CD8-positive, alpha-beta T cell (primary cell): ENCODE measurements at regions of chr4 and their contacts with region 1.

Region 1: DNA sequence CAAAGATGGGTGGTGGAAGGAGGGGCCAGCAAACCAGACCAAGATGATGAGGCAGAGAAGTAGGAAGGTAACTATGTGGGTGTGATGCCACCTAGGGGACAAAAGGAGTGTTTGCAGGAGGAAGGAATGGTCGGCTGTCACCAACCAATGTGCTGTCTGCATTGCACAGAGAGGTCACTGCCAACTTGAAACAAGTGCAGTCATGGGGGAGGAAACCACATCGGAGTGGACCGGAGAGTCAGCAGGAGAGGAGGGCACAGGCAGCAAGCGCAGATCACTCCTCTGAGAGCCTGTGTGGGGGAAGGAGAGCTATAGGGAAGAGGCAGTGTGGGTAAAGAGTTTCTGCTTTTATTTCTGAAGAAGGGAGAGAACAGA is 38.5 kb upstream of the FGFBP2 start:
- DNase-seq: peak in 8 of 9 experiments; percentile 13 to 81 (median 47)
- ATAC-seq: peak; percentile 96
- H3K4me3 ChIP-seq: no peak overlapping the region
- H3K4me3 Mint-ChIP-seq: no peak overlapping the region
- H3K27ac ChIP-seq: no peak overlapping the region
- H3K27ac Mint-ChIP-seq: no peak overlapping the region
- H3K4me1 ChIP-seq: no peaks in the 10 kb centered on the region
- H3K4me1 Mint-ChIP-seq: no peaks in the 10 kb centered on the region
- H3K27me3 ChIP-seq: no peaks in the 10 kb centered on the region
- H3K27me3 Mint-ChIP-seq: peaks cover 3% of the 10 kb centered on the region
- CTCF ChIP-seq: peak; percentile 68

Region 2: DNA sequence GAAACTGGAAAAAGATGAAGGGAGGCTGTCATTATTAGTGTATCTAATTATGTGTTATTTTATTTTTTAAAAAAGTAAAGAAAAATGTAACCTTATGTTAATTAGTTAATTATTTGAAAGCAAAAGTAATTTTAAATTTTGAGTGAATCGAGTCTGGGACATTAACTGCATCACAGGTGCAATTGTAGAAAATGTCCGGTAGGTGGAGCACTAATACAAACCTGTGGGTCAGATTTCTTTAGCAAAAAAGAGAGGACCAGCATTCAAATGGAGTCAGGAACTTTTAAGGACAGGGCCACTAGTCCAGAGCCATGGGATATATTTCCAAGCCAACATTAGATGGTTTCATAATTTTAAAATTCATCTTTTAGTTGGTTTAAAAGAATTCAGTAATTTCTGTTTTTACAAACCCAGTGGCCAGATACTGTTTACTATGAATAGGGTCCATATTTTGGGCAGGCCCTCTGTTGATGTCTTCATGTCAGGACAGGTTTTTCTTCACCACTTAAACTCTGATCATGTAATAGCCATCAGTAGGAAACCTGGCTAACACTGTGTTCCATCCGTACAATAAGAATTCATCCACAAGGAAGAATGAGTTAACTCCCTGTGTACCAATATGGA is 271.4 kb before region 1 on chr4:
- CTCF ChIA-PET with region 1: no interaction called
- POLR2A ChIA-PET with region 1: no interaction called
- intact Hi-C with region 1: loop called (anchors 1 to 2 kb)
- DNase-seq: peak in 6 of 9 experiments; percentile 10 to 71 (median 28)
- ATAC-seq: peak; percentile 70
- H3K4me3 ChIP-seq: no peak overlapping the region
- H3K4me3 Mint-ChIP-seq: no peak overlapping the region
- H3K27ac ChIP-seq: no peak overlapping the region
- H3K27ac Mint-ChIP-seq: no peak overlapping the region
- H3K4me1 ChIP-seq: no peaks in the 10 kb centered on the region
- H3K4me1 Mint-ChIP-seq: peaks cover 20% of the 10 kb centered on the region
- H3K27me3 ChIP-seq: no peaks in the 10 kb centered on the region
- H3K27me3 Mint-ChIP-seq: peaks cover 2% of the 10 kb centered on the region
- CTCF ChIP-seq: peak; percentile 100

Region 3: DNA sequence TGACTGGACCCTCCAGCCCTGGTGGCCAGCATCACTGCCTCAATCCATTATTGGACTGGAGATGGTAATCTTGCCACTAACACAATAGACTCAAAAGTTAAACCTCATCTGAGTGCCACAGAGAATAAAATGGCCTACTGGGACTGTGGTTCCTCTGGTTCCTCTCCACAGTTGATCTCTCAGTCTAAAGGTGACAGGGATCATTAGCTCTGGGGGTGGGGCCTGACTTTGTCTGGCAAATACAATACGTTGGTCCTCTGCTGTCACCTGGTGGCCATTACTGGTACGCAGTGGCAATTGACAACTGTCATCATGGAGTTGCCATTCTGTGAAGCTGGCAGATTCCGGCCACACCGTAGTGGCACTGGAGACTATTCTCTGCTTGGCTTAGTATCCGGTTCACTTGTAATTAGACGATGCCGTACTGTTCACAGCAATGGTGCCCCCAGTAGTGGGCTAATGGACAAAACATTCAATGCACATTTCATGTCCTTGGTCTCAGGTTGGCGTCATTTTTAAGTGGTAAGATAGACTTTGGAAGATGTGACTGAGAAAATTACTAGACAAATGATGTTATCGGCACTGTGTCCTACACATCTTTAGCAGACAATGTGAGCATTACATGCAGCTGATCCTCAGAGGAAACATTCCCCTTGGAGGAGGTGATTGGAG is 45.2 kb before region 1 on chr4:
- CTCF ChIA-PET with region 1: interaction called, 87 read pairs
- POLR2A ChIA-PET with region 1: no interaction called
- intact Hi-C with region 1: no loop called
- DNase-seq: peak; percentile 55 to 87 (median 79)
- ATAC-seq: peak; percentile 98
- H3K4me3 ChIP-seq: no peak overlapping the region
- H3K4me3 Mint-ChIP-seq: no peak overlapping the region
- H3K27ac ChIP-seq: no peak overlapping the region
- H3K27ac Mint-ChIP-seq: no peak overlapping the region
- H3K4me1 ChIP-seq: no peaks in the 10 kb centered on the region
- H3K4me1 Mint-ChIP-seq: peaks cover 10% of the 10 kb centered on the region
- H3K27me3 ChIP-seq: no peaks in the 10 kb centered on the region
- H3K27me3 Mint-ChIP-seq: no peaks in the 10 kb centered on the region
- CTCF ChIP-seq: peak; percentile 73

Region 4: GRCh38 chr4:15963001-15963451 is 38.4 kb before region 1 on chr4 and contains the start of gene FGFBP2:
- CTCF ChIA-PET with region 1: interaction called, 87 read pairs
- POLR2A ChIA-PET with region 1: interaction called, 5 read pairs
- intact Hi-C with region 1: loop called (anchors 1 kb)
- DNase-seq: peak; percentile 47 to 91 (median 74)
- ATAC-seq: peak; percentile 84
- H3K4me3 ChIP-seq: peak within 1 kb of the TSS; percentile 26 to 60
- H3K4me3 Mint-ChIP-seq: peak within 1 kb of the TSS; percentile 59
- H3K27ac ChIP-seq: peak within 1 kb of the TSS; percentile 56 to 73
- H3K27ac Mint-ChIP-seq: peak within 1 kb of the TSS; percentile 83
- H3K4me1 ChIP-seq: peaks cover 27% of the 10 kb centered on the region
- H3K4me1 Mint-ChIP-seq: peaks cover 36% of the 10 kb centered on the region
- H3K27me3 ChIP-seq: no peaks in the 10 kb centered on the region
- H3K27me3 Mint-ChIP-seq: no peaks in the 10 kb centered on the region
- CTCF ChIP-seq: peak; percentile 38
- total RNA-seq, gene FGFBP2: 8.2 to 9.9 TPM

Region 5: DNA sequence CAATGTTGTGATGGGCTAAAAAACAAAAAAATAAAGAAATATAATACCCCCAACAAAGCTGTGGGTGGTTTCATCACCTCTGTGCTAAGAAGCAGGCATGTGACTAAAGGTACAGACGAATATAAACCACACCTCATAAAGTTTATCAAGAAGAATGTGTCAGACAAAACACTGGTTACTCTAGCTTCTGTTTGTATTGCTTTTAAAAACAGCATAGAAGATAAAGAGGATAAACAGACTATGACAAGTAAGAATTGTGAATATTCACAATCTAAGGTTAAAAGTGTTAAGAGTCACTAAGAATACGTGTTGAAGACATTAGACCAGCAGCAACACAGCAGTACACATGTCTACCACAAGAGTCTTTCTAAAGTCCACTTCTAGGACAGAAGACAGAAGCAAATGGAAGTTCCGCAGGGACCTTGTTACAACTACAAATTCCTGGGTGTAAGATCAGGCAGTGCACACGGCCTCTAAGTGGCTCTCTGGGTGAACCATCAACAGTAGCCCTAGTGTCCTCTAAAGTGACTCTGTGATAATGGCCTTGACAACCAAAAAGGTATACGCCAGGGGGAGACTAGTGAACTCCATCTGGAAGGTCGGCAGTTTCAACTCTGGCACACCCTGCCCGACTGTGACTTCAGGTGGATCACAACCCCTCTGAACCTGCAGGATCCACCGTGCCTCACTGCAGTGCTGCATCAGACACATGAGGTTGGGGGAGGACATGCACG is 30.2 kb before region 1 on chr4:
- CTCF ChIA-PET with region 1: interaction called, 87 read pairs
- POLR2A ChIA-PET with region 1: no interaction called
- intact Hi-C with region 1: no loop called
- DNase-seq: peak in 2 of 9 experiments; percentile 23 to 36
- ATAC-seq: peak; percentile 49
- H3K4me3 ChIP-seq: no peak overlapping the region
- H3K4me3 Mint-ChIP-seq: no peak overlapping the region
- H3K27ac ChIP-seq: no peak overlapping the region
- H3K27ac Mint-ChIP-seq: no peak overlapping the region
- H3K4me1 ChIP-seq: no peaks in the 10 kb centered on the region
- H3K4me1 Mint-ChIP-seq: no peaks in the 10 kb centered on the region
- H3K27me3 ChIP-seq: peaks cover 0 to 2% of the 10 kb centered on the region in 2 experiments
- H3K27me3 Mint-ChIP-seq: no peaks in the 10 kb centered on the region
- CTCF ChIP-seq: no peak

Region 6: DNA sequence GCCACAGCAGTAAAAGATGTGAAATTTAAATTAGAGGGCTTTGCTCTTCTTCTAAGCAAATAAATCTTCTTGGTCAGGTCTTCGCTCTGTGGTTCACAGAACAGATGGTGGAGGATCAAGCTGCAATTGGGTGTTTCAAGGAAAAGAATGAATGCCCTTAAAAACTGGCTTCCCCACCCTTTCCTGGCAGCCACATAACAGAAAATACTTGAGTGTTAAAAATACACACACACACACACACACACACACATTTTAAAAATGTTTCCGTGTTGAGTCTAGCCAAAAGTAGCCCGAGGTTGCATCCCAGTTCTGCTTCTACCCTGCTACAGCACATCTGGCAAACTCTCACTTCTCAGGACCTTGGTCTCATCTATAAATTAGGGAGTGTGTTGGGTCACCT is 18.2 kb after region 1 on chr4:
- CTCF ChIA-PET with region 1: interaction called, 16 read pairs
- POLR2A ChIA-PET with region 1: no interaction called
- intact Hi-C with region 1: no loop called
- DNase-seq: no peak
- ATAC-seq: no peak
- H3K4me3 ChIP-seq: no peak overlapping the region
- H3K4me3 Mint-ChIP-seq: no peak overlapping the region
- H3K27ac ChIP-seq: no peak overlapping the region
- H3K27ac Mint-ChIP-seq: no peak overlapping the region
- H3K4me1 ChIP-seq: no peaks in the 10 kb centered on the region
- H3K4me1 Mint-ChIP-seq: no peaks in the 10 kb centered on the region
- H3K27me3 ChIP-seq: no peaks in the 10 kb centered on the region
- H3K27me3 Mint-ChIP-seq: peaks cover 13% of the 10 kb centered on the region
- CTCF ChIP-seq: no peak

Region 7: GRCh38 chr4:17414392-17414791 is 1412.9 kb after region 1 on chr4:
- CTCF ChIA-PET with region 1: no interaction called
- POLR2A ChIA-PET with region 1: no interaction called
- intact Hi-C with region 1: no loop called
- DNase-seq: no peak
- ATAC-seq: no peak
- H3K4me3 ChIP-seq: no peak overlapping the region
- H3K4me3 Mint-ChIP-seq: no peak overlapping the region
- H3K27ac ChIP-seq: no peak overlapping the region
- H3K27ac Mint-ChIP-seq: no peak overlapping the region
- H3K4me1 ChIP-seq: no peaks in the 10 kb centered on the region
- H3K4me1 Mint-ChIP-seq: no peaks in the 10 kb centered on the region
- H3K27me3 ChIP-seq: no peaks in the 10 kb centered on the region
- H3K27me3 Mint-ChIP-seq: peaks cover 4% of the 10 kb centered on the region
- CTCF ChIP-seq: no peak